ENCODE measurements at regions of chr11 and their contacts with region 1.

Region 1: DNA sequence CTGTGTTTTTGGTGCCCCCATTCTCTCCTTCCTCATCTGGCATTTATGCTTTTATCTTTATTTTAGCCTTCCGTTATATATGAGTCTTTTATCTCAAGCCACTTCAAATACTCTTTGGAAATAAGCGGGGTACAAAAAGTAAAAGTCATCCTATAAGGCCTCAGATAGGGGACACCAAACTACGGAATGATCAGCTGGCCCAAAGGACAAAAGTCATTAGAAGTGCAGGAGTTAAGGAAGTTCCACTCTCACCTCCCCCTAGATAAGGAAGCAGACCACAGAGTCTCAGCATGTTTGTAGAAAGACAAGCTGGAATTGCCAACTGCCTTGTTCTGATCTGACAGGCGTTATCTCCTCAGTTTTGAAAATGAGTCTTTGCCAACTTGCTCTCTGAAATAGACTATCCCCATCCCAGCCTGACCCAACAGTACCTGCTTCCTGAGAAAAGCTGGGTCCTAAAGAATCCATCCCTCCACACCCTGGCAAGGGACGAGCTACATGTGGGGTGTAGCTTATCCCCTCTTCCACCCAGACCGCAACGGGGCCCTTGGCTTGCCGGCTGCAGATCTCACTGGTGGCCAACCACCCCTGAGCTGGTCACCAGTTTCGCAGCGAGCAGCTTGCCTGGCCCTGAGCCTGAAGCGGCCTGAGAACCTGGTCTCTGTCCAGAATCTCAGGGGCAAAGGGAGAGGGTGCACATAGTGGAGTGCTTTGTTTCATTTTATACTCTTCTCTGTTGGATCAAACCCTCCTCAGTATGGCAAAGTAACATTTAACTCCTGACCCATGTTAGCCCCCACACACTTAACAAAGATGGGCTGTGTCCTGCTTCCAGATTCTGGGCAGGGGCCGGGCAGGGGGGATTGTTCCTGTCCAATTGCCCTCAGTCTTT is 13.8 kb downstream of the FADS2 start:
- DNase-seq: peak; percentile 41 to 47
- ATAC-seq: peak; percentile 31 to 82 (median 62)
- H3K4me3 ChIP-seq: no peak overlapping the region
- H3K27ac ChIP-seq: peak overlapping the region in 8 of 10 donors; percentile 13 to 73 (median 59)
- H3K4me1 ChIP-seq: peaks cover 0 to 16% (median 5%) of the 10 kb centered on the region in 9 donors
- H3K27me3 ChIP-seq: no peaks in the 10 kb centered on the region
- CTCF ChIP-seq: no peak

Region 2: GRCh38 chr11:61860054-61860903 is 18.4 kb after region 1 on chr11:
- intact Hi-C with region 1: loop called in 1 of 10 experiments (anchors 1 kb)
- DNase-seq: peak; percentile 81 to 83
- ATAC-seq: peak; percentile 45 to 82 (median 72)
- H3K4me3 ChIP-seq: no peak overlapping the region
- H3K27ac ChIP-seq: peak overlapping the region in 8 of 10 donors; percentile 38 to 88 (median 68)
- H3K4me1 ChIP-seq: peaks cover 6 to 27% (median 14%) of the 10 kb centered on the region in 9 donors
- H3K27me3 ChIP-seq: no peaks in the 10 kb centered on the region
- CTCF ChIP-seq: no peak

Measured in heart right ventricle (tissue), 16 donors.